ENCODE measurements at regions of chr13 and their contacts with region 1.

Region 1: GRCh38 chr13:114099918-114100445 is 32.4 kb downstream of the RASA3 start:
- DNase-seq: peak in 1 of 2 donors; percentile 35
- ATAC-seq: peak in 1 of 2 donors; percentile 63
- H3K4me3 ChIP-seq: no peak overlapping the region
- H3K27ac ChIP-seq: peak overlapping the region; percentile 59 to 78 (median 68)
- H3K4me1 ChIP-seq: peaks cover 25 to 38% of the 10 kb centered on the region in 2 donors
- H3K27me3 ChIP-seq: no peaks in the 10 kb centered on the region
- CTCF ChIP-seq: no peak
- POLR2A ChIP-seq: no peak

Region 2: GRCh38 chr13:114065141-114065925 is 34.6 kb before region 1 on chr13:
- in situ Hi-C with region 1: no loop called
- intact Hi-C with region 1: loop called (anchors 2 kb)
- DNase-seq: peak; percentile 77 to 86
- ATAC-seq: peak; percentile 86
- H3K4me3 ChIP-seq: peak overlapping the region; percentile 55 to 70 (median 56)
- H3K27ac ChIP-seq: peak overlapping the region; percentile 93 to 96 (median 95)
- H3K4me1 ChIP-seq: peaks cover 41 to 47% of the 10 kb centered on the region in 2 donors
- H3K27me3 ChIP-seq: no peaks in the 10 kb centered on the region
- CTCF ChIP-seq: peak in 1 of 5 experiments; percentile 40
- POLR2A ChIP-seq: peak in 1 of 2 donors; percentile 31